Activated B cell treated with CpG ODN at 0.5 μM for 24 hours (primary cell): ENCODE measurements at regions of chr5 and their contacts with region 1.

Region 1: DNA sequence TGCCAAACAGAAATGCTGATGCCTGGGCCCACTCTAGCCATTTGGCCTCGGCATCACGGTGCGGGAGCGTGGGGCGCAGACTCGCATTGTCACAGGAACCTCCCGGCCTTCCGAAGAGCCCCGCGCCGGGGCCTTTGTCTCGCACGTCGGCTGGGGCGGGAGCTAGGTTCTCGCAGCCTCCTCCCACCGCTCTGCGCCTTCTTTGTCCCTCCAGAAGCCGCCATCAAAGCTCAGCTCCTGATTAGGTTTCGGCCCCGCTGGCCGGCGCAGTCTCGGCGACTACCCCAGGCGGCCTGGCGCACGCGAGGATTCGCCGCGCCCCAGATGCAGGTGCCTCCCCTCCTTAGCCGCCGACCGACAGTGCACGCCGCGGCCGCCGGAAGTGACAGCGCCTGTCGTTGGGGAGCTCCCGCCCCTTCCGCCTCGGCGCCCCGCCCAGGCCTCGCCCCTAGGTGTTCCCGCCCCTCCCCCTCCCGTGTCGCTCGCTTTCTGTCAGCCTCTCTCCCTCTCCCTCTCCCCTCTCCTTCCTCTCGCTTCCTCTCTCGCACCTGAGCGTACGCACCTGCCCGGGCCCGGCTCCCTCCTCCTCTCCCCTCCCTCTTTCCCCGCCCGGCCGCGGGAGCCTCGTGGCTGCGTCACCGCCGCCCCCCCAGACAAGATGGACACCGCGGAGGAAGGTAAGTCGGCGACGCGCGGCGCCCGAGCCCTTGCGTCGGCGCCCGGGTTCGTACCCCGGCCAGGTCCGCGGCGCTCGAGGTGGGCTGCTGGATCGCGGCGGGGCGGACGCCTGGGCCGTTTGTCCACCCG is at the start of gene MARCHF6:
- DNase-seq: peak; percentile 94
- ATAC-seq: peak; percentile 77
- H3K4me3 Mint-ChIP-seq: peak within 1 kb of the TSS; percentile 98
- H3K27ac Mint-ChIP-seq: peak within 1 kb of the TSS; percentile 98
- H3K4me1 Mint-ChIP-seq: peaks cover 49% of the 10 kb centered on the region
- H3K27me3 Mint-ChIP-seq: no peaks in the 10 kb centered on the region
- CTCF ChIP-seq: no peak
- total RNA-seq, gene MARCHF6: 116 and 124 TPM in 2 replicates

Region 2: DNA sequence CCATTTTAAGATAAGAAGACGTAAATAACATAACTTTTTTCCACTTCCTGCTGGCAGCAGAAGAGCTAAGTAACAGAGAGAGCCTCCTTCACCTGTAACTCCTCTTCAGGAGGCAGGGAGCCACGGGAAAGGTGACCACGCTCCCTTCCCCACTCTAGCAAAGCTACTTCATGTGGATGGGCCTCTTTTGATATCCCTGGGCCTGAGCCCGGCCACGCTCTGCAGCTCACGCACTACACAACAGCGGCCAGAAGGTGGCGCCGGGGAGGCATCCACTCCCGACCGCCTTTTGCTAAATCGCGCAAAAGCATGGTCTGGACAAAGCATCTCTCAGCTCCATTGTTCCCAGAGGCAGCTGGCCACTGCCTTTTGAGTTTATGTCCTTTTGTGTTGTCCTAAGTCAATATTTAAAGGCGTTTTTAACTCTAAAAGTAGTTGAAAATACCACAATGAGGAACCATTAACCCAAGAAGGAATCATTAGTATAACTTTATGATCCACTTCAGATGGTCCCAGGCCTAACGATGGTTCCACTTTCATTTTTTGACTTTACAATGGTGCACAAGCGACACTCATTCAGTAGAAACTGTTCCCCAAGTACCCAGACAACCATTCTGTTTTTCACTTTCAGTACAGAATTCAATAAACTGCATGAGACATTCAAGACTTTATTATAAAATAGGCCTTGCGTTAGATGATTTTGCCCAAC is 69.4 kb before region 1 on chr5:
- CTCF ChIA-PET with region 1: interaction called, 4 read pairs
- POLR2A ChIA-PET with region 1: interaction called, 8 read pairs
- intact Hi-C with region 1: loop called (anchors 1 kb)
- DNase-seq: peak; percentile 73
- ATAC-seq: peak; percentile 99
- H3K4me3 Mint-ChIP-seq: no peak overlapping the region
- H3K27ac Mint-ChIP-seq: no peak overlapping the region
- H3K4me1 Mint-ChIP-seq: peaks cover 13% of the 10 kb centered on the region
- H3K27me3 Mint-ChIP-seq: peaks cover 2% of the 10 kb centered on the region
- CTCF ChIP-seq: peak; percentile 92

Region 3: DNA sequence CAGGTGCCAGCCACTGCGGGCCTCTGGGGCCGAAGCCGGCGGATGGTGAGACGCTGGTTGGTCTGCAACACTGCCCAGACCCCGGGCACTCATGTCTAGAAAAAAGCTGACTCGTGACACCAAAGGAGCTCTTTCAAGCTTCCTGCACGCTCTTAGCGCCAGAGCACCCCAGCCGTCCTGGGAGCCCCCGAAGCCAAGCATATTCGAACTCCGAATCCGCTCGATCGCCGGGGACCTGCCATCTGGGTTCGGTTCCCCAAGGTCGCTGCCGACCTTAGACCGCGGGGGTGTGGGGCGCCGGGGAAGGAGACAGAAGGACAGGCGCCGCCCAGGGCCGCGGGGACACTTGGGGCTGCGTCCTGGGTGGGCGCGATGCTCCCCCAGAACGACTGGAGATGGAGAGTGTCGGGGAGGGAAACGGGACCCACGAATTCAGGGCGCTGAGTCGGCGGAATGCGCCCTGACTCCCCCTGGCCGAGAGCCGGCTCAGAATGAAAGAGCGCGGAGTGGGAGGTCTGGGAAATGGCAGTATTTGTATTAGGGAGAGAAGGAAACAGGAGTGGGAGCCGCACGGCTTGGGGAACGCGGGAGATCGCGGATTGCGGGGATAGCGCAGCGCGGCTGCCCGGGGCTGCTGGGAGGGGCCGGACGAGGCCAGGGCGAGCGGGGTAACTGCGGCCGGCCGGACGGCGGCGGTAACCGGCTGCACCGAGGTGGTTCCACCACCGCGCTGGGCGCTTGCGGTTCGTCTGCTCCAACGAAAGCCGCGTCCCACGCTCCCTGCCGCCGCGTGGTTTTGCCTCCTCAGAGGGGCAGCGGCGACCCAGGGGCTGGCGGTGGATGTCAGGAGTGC is 20.1 kb before region 1 on chr5:
- CTCF ChIA-PET with region 1: no interaction called
- POLR2A ChIA-PET with region 1: interaction called, 6 read pairs
- intact Hi-C with region 1: loop called (anchors 1 kb)
- DNase-seq: peak; percentile 29
- ATAC-seq: peak; percentile 37
- H3K4me3 Mint-ChIP-seq: peak overlapping the region; percentile 84
- H3K27ac Mint-ChIP-seq: no peak overlapping the region
- H3K4me1 Mint-ChIP-seq: peaks cover 9% of the 10 kb centered on the region
- H3K27me3 Mint-ChIP-seq: peaks cover 46% of the 10 kb centered on the region
- CTCF ChIP-seq: no peak

Region 4: GRCh38 chr5:10424124-10424731 is 70.8 kb after region 1 on chr5:
- CTCF ChIA-PET with region 1: no interaction called
- POLR2A ChIA-PET with region 1: interaction called, 5 read pairs
- intact Hi-C with region 1: loop called (anchors 5 kb)
- DNase-seq: no peak
- ATAC-seq: peak; percentile 61
- H3K4me3 Mint-ChIP-seq: no peak overlapping the region
- H3K27ac Mint-ChIP-seq: no peak overlapping the region
- H3K4me1 Mint-ChIP-seq: peaks cover 28% of the 10 kb centered on the region
- H3K27me3 Mint-ChIP-seq: no peaks in the 10 kb centered on the region
- CTCF ChIP-seq: no peak

Region 5: GRCh38 chr5:10595678-10596309 is 242.3 kb after region 1 on chr5:
- CTCF ChIA-PET with region 1: no interaction called
- POLR2A ChIA-PET with region 1: no interaction called
- intact Hi-C with region 1: no loop called
- DNase-seq: no peak
- ATAC-seq: no peak
- H3K4me3 Mint-ChIP-seq: no peak overlapping the region
- H3K27ac Mint-ChIP-seq: no peak overlapping the region
- H3K4me1 Mint-ChIP-seq: peaks cover 75% of the 10 kb centered on the region
- H3K27me3 Mint-ChIP-seq: no peaks in the 10 kb centered on the region
- CTCF ChIP-seq: no peak

Region 6: DNA sequence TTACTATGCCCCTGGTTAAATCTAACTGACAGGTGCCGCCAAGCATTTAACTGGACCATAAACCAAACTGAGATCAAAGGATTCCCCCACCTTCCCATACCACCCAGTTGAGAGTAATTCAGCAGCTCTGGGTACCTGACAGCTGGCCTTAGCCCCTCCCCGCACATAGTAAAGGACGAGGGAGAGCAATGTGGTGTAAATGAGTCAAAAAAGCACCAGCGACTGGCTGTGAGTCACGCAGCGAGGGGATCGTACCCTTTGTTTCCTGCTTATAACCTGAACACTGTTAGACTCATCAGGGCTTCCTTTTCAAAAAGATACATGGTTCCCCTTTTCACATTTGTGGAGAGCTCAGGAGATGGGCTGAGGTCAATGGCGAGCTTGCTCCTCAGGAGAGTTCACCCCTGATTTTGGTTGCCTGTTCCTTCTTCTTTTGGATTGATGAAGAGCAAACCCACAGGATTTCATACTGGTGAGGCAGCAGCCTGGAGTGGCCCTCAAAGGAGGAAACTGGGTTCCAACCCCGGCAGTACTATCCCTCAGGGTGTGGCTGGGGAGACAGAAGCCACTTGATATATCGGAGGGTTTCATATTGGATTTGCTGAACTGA is 281.9 kb after region 1 on chr5:
- CTCF ChIA-PET with region 1: no interaction called
- POLR2A ChIA-PET with region 1: interaction called, 26 read pairs
- intact Hi-C with region 1: loop called (anchors 1 kb)
- DNase-seq: peak; percentile 57
- ATAC-seq: peak; percentile 64
- H3K4me3 Mint-ChIP-seq: peak overlapping the region; percentile 82
- H3K27ac Mint-ChIP-seq: peak overlapping the region; percentile 99
- H3K4me1 Mint-ChIP-seq: peaks cover 81% of the 10 kb centered on the region
- H3K27me3 Mint-ChIP-seq: no peaks in the 10 kb centered on the region
- CTCF ChIP-seq: no peak

Region 7: DNA sequence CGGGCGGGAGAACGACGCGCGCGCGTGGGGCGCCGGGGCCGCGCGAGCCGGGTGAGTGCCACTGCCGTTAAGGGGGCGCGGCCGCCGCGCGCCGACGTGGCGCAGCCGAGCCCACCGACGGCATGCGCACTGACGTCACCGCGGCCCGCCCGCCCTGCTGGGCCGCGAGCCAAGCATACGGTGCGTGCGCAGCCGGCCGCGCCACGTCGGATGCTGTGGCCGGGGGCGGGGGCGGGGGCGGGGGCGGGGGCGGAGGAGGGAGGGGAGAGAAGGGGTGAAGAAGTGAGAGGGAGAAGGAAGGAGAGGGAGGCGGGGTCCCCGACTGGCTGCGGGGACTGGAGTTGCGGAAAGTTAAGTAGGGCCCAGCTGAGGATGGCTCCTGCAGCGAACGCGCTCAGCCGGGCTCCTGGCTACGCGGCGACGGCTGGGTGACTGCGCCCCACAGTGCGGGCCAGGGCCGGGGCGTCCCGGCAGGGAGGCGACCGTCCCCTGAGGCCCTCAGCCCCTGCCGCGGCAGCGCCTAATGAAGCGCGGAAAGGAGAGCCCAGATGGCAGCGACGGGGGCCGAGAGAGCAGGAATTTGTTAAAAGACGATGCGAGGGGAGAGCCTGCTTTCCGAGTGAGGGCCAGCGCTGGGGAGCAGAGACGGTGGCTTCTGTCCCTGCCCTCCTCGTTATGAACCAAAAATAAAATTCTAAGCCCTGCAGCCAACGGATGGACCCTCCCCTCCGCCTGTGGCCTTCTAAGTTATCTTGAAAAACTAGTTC is 407.9 kb after region 1 on chr5 and contains the start of gene DAP:
- CTCF ChIA-PET with region 1: no interaction called
- POLR2A ChIA-PET with region 1: interaction called, 5 read pairs
- intact Hi-C with region 1: loop called (anchors 2 kb)
- DNase-seq: peak; percentile 92
- ATAC-seq: peak; percentile 82
- H3K4me3 Mint-ChIP-seq: peak within 1 kb of the TSS; percentile 91
- H3K27ac Mint-ChIP-seq: peak within 1 kb of the TSS; percentile 92
- H3K4me1 Mint-ChIP-seq: peaks cover 57% of the 10 kb centered on the region
- H3K27me3 Mint-ChIP-seq: no peaks in the 10 kb centered on the region
- CTCF ChIP-seq: no peak
- total RNA-seq, gene DAP: 50.5 and 51.3 TPM in 2 replicates

Region 8: DNA sequence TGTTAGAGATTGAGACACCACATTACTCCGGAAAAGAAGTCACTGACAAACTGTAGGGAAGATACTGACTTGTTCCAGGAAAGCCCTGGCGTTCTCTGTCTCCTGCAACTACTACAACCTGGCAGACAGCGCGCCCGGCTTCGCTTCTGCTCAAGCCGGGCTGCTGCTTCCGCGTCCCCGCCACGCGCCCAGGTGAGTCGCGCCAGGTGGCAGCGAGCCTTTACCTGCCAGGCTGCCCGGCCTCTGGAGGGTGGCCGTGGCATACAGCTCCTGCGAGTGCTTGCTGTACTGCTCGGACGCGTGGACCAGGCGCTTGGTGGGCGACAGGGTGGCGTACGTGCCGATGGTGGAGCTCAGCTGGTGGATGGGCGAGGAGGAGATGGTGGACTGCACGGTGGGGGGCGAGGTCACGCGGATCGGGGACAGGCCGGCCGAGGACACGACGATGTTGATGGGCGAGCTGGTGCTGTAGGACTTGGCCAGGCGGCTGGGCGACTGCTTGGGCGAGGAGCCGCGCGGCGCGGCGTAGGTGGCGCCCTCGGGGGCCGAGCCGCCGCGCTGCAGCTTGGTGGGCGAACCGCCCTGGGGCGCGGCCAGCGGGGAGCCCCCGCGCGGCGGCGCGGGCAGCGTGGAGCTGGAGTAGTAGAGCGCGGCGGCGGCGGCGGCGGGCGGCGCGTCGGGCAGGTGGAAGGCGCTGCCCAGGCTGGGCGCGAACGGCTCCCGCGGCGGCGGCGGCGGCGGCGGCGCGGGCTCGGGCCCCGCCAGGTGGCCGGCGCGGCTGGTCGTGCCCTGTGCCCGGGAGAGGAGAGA is 1031.2 kb after region 1 on chr5:
- CTCF ChIA-PET with region 1: no interaction called
- POLR2A ChIA-PET with region 1: no interaction called
- intact Hi-C with region 1: no loop called
- DNase-seq: no peak
- ATAC-seq: no peak
- H3K4me3 Mint-ChIP-seq: no peak overlapping the region
- H3K27ac Mint-ChIP-seq: no peak overlapping the region
- H3K4me1 Mint-ChIP-seq: peaks cover 10% of the 10 kb centered on the region
- H3K27me3 Mint-ChIP-seq: peaks cover 30% of the 10 kb centered on the region
- CTCF ChIP-seq: no peak